PC-9 (cell line): ENCODE measurements at regions of chr2 and their contacts with region 1.

Region 1: DNA sequence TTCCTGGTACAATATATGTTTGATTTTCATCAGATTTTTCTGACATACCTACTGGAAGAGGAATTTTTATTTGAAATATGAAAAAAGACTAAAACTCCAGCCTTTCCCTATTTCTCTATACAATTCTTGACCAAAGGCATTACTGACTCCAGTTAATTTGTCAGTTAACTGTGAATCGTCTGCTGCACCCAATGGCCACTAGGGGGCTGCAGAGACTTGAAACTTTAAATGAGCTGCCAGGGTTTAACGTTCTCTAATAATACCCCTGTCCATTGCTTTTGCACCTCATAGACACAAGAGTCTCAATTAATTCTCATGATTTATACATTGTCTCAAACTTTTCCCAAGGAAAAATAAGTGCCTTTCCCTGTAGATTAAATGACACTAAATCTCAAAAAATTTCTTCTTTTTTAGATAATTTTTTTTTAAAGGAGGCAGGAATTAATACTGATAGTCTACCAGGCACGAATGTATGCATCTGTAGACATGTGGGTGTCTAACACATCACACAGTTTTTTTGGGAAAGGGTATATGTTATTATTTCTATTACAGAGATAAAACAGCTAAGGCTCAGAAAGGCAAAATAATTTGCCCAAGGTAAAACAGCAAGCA is 1.8 kb upstream of the ALK start:
- DNase-seq: peak; percentile 26 to 53
- H3K4me3 ChIP-seq: no peak overlapping the region
- H3K27ac ChIP-seq: no peak overlapping the region
- H3K4me1 ChIP-seq: no peaks in the 10 kb centered on the region
- H3K27me3 ChIP-seq: peaks cover 19% of the 10 kb centered on the region
- CTCF ChIP-seq: peak; percentile 96

Region 2: GRCh38 chr2:29042561-29043075 is 880.6 kb before region 1 on chr2:
- CTCF ChIA-PET with region 1: no interaction called
- POLR2A ChIA-PET with region 1: no interaction called
- intact Hi-C with region 1: no loop called
- DNase-seq: no peak
- H3K4me3 ChIP-seq: no peak overlapping the region
- H3K27ac ChIP-seq: no peak overlapping the region
- H3K4me1 ChIP-seq: no peaks in the 10 kb centered on the region
- H3K27me3 ChIP-seq: no peaks in the 10 kb centered on the region
- CTCF ChIP-seq: no peak

Region 3: GRCh38 chr2:29871541-29871940 is 51.7 kb before region 1 on chr2:
- CTCF ChIA-PET with region 1: no interaction called
- POLR2A ChIA-PET with region 1: no interaction called
- intact Hi-C with region 1: no loop called
- DNase-seq: no peak
- H3K4me3 ChIP-seq: no peak overlapping the region
- H3K27ac ChIP-seq: no peak overlapping the region
- H3K4me1 ChIP-seq: no peaks in the 10 kb centered on the region
- H3K27me3 ChIP-seq: 0 out of 2 replicates have a peak, but pooled peaks cover 9% of the 10 kb centered on the region
- CTCF ChIP-seq: no peak

Region 4: GRCh38 chr2:30026087-30027055 is 103.2 kb after region 1 on chr2:
- CTCF ChIA-PET with region 1: no interaction called
- POLR2A ChIA-PET with region 1: no interaction called
- intact Hi-C with region 1: loop called (anchors 2 kb)
- DNase-seq: peak in 1 of 2 experiments; percentile 26
- H3K4me3 ChIP-seq: no peak overlapping the region
- H3K27ac ChIP-seq: no peak overlapping the region
- H3K4me1 ChIP-seq: peaks cover 14% of the 10 kb centered on the region
- H3K27me3 ChIP-seq: peaks cover 45% of the 10 kb centered on the region
- CTCF ChIP-seq: peak; percentile 72

Region 5: GRCh38 chr2:30072250-30072842 is 149.1 kb after region 1 on chr2:
- CTCF ChIA-PET with region 1: interaction called, 3 read pairs
- POLR2A ChIA-PET with region 1: no interaction called
- intact Hi-C with region 1: loop called (anchors 1 kb)
- DNase-seq: peak; percentile 53 to 60
- H3K4me3 ChIP-seq: no peak overlapping the region
- H3K27ac ChIP-seq: no peak overlapping the region
- H3K4me1 ChIP-seq: no peaks in the 10 kb centered on the region
- H3K27me3 ChIP-seq: peaks cover 78% of the 10 kb centered on the region
- CTCF ChIP-seq: peak; percentile 81

Region 6: DNA sequence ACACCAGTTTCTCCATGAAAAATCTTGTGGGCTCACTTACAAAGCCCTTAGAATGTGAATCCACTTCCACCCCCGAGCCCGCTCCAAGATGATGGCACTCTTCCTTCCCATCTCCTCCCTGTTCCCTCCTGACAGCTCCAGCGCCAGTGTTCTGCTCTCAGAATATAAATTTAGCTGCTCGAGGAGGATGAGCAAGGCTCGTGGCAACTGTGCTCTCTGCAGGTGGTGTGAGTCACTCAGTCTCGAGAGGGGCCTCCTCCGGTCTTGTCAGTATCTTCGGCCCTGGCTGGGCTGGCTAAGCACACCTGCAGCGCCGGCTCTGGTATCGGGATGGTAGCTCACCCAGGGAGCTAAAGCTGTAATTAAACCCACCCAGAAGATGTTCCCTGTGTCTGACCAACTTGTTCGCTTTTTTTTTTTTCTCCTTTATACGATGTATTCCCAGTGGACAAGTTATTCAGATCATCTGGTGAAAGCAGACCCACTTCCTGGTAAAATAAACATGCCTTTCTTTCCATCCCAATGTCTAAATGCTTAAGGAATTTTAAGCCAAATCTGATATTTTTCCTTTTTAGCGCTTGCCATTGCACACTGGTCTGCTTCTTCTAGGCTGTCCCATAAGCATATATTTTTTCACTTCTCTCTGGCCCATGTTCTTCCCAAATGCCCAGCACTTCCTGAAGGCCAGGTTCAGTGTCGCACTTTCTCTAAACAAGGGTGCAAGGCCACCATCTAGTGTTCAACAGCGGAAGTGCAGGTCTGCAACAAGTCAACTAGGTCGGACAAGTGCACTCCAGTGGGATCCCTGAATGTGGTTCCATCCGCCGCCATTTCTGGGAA is 192.1 kb after region 1 on chr2:
- CTCF ChIA-PET with region 1: no interaction called
- POLR2A ChIA-PET with region 1: no interaction called
- intact Hi-C with region 1: loop called (anchors 1 kb)
- DNase-seq: peak; percentile 36 to 71
- H3K4me3 ChIP-seq: no peak overlapping the region
- H3K27ac ChIP-seq: no peak overlapping the region
- H3K4me1 ChIP-seq: peaks cover 9% of the 10 kb centered on the region; the same call in 1 of the 2 replicates
- H3K27me3 ChIP-seq: peaks cover 5% of the 10 kb centered on the region; the same call in 1 of the 2 replicates
- CTCF ChIP-seq: peak; percentile 97